Activated T-helper 2 cell treated with anti-CD3 and anti-CD28 coated beads, Interferon-gamma antibody, Interleukin-2, Interleukin-4, amounts not matched to agents 10 μg/mL and 5 μg/mL and 100 μg/mL, durations not matched to agents 14 hours and 24 hours and 36 hours (primary cell): ENCODE measurements at regions of chr1 and their contacts with region 1.

Region 1: GRCh38 chr1:20640183-20640597 is 6.9 kb downstream of the PINK1 start:
- DNase-seq: peak; percentile 51
- H3K4me3 Mint-ChIP-seq: no peak overlapping the region
- H3K27ac Mint-ChIP-seq: no peak overlapping the region
- H3K4me1 Mint-ChIP-seq: peaks cover 3% of the 10 kb centered on the region
- H3K27me3 Mint-ChIP-seq: no peaks in the 10 kb centered on the region

Region 2: DNA sequence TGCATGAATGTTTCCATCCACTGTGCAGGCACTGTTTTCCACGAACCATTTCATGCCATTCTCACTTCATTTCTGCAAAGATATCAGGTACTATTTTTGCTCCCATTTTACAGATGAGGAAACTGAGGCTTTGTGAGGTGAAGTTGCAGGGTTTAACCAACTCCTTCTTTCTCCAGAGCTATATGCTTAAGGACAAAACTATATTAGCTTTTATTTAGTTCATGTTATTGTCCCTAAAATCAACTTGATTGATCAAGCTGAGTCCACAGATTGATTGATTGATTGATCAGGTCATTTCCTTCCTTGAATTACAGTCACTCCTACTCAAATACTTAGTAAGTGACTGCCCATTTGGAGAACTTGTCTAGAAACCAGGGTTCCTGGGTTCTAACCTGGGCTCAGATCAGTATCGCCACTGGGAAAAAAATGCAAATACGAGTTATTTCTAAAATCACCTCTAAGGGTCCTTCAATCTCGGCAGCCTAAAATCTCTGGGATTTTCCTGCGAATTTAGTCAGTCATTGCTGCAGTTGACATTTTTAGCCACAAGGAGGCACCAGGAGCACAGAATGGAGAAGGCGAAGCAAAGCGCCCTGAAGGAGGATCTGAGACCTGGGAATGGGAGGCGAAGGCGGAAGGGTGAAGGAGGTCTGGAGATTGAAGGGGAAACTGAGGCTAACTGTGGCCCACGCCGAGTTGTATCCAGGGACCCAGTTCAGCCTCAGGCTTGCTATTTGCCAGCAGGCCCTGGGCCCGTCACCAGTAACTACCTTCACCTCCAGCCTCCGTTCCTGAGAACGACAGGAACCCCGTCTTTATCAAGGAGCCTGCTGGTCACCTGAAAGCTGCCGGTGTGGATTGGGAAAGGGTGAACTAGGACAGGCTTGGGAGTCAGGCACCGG is 118.0 kb before region 1 on chr1:
- intact Hi-C with region 1: loop called (anchors 1 kb)
- DNase-seq: peak; percentile 43
- H3K4me3 Mint-ChIP-seq: no peak overlapping the region
- H3K27ac Mint-ChIP-seq: no peak overlapping the region
- H3K4me1 Mint-ChIP-seq: peaks cover 7% of the 10 kb centered on the region
- H3K27me3 Mint-ChIP-seq: peaks cover 3% of the 10 kb centered on the region

Region 3: GRCh38 chr1:20551945-20552727 is 88.1 kb before region 1 on chr1 and contains the start of gene FAM43B:
- intact Hi-C with region 1: no loop called
- DNase-seq: no peak
- H3K4me3 Mint-ChIP-seq: no peak within 1 kb of the TSS
- H3K27ac Mint-ChIP-seq: no peak within 1 kb of the TSS
- H3K4me1 Mint-ChIP-seq: no peaks in the 10 kb centered on the region
- H3K27me3 Mint-ChIP-seq: peaks cover 34% of the 10 kb centered on the region
- total RNA-seq, gene FAM43B: not detected in 2 replicates

Region 4: GRCh38 chr1:20574686-20575540 is 65.3 kb before region 1 on chr1:
- intact Hi-C with region 1: loop called (anchors 2 kb)
- DNase-seq: peak; percentile 62
- H3K4me3 Mint-ChIP-seq: no peak overlapping the region
- H3K27ac Mint-ChIP-seq: no peak overlapping the region
- H3K4me1 Mint-ChIP-seq: no peaks in the 10 kb centered on the region
- H3K27me3 Mint-ChIP-seq: peaks cover 11% of the 10 kb centered on the region

Region 5: GRCh38 chr1:20589331-20590278 is 50.6 kb before region 1 on chr1:
- intact Hi-C with region 1: no loop called
- DNase-seq: no peak
- H3K4me3 Mint-ChIP-seq: no peak overlapping the region
- H3K27ac Mint-ChIP-seq: no peak overlapping the region
- H3K4me1 Mint-ChIP-seq: peaks cover 9% of the 10 kb centered on the region
- H3K27me3 Mint-ChIP-seq: peaks cover 37% of the 10 kb centered on the region